ENCODE measurements at regions of chr22 and their contacts with region 1.

Region 1: GRCh38 chr22:17158568-17159503 is at the start of gene HDHD5:
- DNase-seq: peak; percentile 78
- H3K4me3 Mint-ChIP-seq: peak within 1 kb of the TSS; percentile 88
- H3K27ac Mint-ChIP-seq: peak within 1 kb of the TSS; percentile 75
- H3K4me1 Mint-ChIP-seq: peaks cover 25% of the 10 kb centered on the region
- H3K27me3 Mint-ChIP-seq: no peaks in the 10 kb centered on the region
- total RNA-seq, gene HDHD5: 39.1 and 42.1 TPM in 2 replicates

Region 2: GRCh38 chr22:16824716-16825678 is 333.8 kb before region 1 on chr22 and contains the start of gene XKR3:
- intact Hi-C with region 1: no loop called
- DNase-seq: no peak
- H3K4me3 Mint-ChIP-seq: peak within 1 kb of the TSS; percentile 63
- H3K27ac Mint-ChIP-seq: peak within 1 kb of the TSS; percentile 69
- H3K4me1 Mint-ChIP-seq: peaks cover 22% of the 10 kb centered on the region
- H3K27me3 Mint-ChIP-seq: peaks cover 3% of the 10 kb centered on the region
- total RNA-seq, gene XKR3: not detected in 2 replicates

Region 3: GRCh38 chr22:17120281-17120680 is 38.6 kb before region 1 on chr22:
- intact Hi-C with region 1: loop called (anchors 1 kb)
- DNase-seq: peak; percentile 42
- H3K4me3 Mint-ChIP-seq: no peak overlapping the region
- H3K27ac Mint-ChIP-seq: no peak overlapping the region
- H3K4me1 Mint-ChIP-seq: peaks cover 39% of the 10 kb centered on the region
- H3K27me3 Mint-ChIP-seq: peaks cover 25% of the 10 kb centered on the region

Region 4: DNA sequence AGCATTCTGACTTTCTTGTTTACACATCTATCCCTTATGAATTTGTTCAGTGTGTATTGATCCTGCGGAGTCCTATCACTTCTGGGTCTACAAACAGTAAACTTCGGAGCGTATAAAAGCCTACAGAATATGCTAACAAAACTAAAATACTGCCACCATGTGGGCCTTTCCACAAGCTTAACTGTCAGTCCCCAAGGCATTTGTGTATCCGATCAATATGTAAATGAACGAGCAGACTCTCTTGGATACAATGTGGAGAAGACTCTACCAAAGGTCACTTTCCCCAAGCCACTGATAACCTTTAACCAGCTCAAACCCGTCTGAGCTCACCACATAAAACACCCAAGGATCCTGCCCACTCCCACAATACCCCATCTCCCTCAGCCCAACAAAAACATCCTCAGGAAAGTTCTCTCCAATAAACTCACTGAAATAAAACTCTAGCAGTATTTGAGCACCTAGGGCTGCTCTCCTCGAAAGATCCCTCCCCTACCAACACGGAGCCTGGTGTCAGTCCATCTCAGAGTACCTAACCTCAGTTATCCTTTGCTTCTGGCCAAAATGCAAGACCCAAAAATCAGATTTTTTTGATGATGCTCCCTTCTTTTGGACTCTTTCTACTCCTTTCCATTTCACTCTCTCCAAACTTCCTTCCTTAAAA is 42.6 kb after region 1 on chr22:
- intact Hi-C with region 1: no loop called
- DNase-seq: no peak
- H3K4me3 Mint-ChIP-seq: no peak overlapping the region
- H3K27ac Mint-ChIP-seq: no peak overlapping the region
- H3K4me1 Mint-ChIP-seq: no peaks in the 10 kb centered on the region
- H3K27me3 Mint-ChIP-seq: no peaks in the 10 kb centered on the region

Region 5: DNA sequence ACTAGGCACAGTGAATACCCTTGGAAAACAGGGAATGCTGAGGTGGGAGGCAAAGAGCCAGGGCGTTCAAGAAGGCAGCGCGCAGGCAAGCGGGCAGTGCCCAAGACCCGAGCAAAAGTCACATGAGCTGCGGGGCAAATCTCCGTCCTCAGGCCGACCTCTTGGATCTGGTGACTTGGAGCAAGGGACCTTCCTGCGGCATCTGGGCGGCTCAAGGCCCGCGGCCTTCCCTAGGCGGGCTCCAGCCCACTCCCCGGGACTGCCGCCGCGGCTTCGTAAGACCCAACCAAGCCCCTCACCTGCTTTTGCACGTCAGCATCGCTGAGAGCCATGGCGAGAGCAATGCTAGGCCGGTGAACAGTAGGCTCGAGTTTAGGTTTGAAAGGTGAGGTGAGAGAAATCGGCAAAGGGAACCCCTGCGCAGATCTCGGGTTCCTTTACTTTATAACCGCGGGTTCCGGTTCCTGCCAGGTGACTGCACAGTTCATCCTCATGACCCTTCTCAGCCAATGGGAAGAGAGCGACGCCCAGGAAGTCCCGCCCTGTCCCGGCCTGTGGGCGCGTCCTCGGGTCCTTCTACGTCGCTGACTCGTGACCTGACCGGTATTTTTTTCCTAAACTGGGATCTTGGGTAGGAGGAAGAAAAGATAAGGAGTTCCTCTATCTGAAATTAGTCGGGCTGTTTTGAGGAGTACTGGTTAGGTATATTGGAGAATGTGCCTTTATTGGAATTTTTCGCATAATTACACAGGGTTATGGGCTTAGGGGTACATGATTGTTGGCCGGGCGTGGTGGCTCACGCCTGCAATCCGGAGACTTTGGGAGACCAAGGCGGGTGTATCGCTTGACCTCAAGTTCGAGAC is 469.7 kb after region 1 on chr22 and contains the start of gene ATP6V1E1:
- intact Hi-C with region 1: loop called (anchors 2 kb)
- DNase-seq: peak; percentile 95
- H3K4me3 Mint-ChIP-seq: peak within 1 kb of the TSS; percentile 94
- H3K27ac Mint-ChIP-seq: peak within 1 kb of the TSS; percentile 85
- H3K4me1 Mint-ChIP-seq: peaks cover 21% of the 10 kb centered on the region
- H3K27me3 Mint-ChIP-seq: peaks cover 5% of the 10 kb centered on the region
- total RNA-seq, gene ATP6V1E1: 120 and 128 TPM in 2 replicates

Measured in activated T-helper 1 cell treated with anti-CD3 and anti-CD28 coated beads, Interleukin-12 subunit alpha, Interleukin-12 subunit beta, Interleukin-2, Interleukin-4 antibody, amounts not matched to agents 30 ng/mL and 10 ng/mL and 1 ng/mL, durations not matched to agents 14 hours and 24 hours and 36 hours (primary cell).